Right ventricle myocardium inferior (tissue), 1 donor: ENCODE measurements at regions of chr16 and their contacts with region 1.

Region 1: DNA sequence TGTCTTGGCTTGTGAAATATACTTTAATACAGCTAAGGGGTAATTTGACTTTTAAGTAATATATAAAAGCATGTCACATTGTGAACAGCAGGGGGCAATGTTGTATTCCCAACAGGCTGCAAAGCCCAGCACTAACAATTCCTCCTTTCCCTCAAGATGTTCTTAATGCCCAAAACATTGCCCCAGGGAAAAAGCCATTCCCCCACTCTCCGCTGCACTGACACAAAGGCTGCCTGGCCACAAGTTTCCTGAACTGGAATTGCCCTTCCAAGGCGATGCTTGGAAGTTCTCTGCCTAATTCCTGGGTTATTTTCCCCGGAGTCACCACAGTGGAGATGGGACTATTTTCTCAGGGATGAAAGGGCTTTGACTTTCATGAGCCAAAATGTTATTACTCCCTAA is 27.2 kb downstream of the CLEC16A start:
- DNase-seq: no peak
- ATAC-seq: peak; percentile 78

Region 2: DNA sequence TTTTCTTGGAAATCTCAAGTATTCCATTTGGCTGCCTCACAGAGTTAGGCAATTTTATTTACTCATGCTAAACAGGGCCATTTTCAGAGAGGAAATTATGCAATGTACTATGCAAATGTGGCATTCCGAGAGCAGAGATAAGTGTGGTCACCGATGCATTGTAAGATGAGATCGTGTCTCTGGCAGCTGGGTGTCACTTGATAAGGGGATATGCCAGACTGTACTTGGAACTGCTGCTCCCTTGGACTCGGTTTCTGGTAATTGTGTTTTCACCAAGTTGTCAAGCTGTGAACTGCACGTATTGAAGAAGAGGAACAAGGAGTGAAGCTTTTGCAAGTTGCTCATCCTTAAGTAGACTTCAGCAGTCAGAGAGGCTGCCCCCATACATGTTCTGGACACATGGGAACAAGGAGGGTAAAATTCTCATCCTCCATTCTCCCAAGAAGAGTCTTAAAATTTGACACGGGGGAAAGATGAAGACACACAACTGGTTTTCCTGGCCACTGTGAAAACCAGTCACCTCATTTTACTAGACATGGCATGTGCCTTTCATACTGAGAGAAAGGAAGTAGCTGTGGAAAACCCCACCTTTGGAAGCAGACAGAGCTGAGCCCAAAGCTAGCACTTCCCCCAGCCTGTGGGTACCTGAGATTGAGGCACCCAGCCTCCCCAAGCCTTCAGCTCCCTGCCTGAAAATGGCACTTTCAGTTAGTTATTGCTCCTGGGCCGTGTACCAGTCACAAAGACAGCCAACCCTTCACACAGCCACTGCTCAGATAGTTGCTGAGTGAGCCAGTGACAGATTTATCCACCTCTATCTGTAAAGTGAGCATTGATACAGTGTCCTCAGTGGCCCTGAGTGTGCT is 133.7 kb after region 1 on chr16:
- intact Hi-C with region 1: loop called (anchors 5 kb)
- DNase-seq: no peak
- ATAC-seq: peak; percentile 81

Region 3: GRCh38 chr16:11297492-11298142 is 326.1 kb after region 1 on chr16:
- intact Hi-C with region 1: loop called (anchors 2 kb)
- DNase-seq: peak; percentile 82
- ATAC-seq: peak; percentile 95

Region 4: DNA sequence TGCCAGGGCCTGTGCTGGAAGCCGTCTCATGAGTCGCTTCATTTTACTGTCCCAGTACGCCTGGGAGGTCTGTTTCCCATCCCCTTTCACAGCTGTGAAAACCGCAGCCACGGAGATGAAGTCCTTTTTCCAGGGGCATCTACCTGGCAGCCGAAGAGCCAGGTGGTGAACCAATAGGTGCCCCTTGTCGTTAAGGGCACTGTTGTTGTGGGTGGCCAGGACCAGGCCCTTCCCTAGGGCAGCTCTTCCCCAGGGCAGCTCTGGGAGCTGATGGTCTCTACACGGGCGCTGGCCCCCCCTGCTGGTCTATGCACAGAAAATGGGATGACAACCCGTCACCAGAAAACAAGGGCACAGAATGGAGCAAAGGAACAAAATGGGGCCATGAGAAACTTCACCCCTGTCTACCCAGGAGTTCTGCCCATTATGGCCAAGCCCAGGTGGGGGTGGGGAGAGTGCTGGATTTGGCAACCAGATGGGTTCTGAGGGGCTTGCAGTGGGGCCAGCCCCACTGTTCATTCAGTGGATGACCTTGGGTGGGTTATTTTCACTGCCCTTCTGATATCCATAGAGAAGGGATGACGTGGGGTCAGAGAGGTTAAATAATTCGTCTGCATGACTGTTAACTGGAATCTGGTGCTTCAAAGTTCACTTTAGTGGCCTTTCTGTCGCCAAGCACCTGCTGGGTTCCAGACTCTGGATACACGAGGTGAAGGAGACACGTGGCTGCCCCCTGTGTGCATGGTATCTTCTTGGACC is 385.2 kb after region 1 on chr16:
- intact Hi-C with region 1: loop called (anchors 2 kb)
- DNase-seq: peak; percentile 84
- ATAC-seq: peak; percentile 58